ENCODE measurements at regions of chr3 and their contacts with region 1.

Region 1: GRCh38 chr3:121545574-121546455 is at the start of gene POLQ:
- DNase-seq: peak; percentile 96
- H3K4me3 Mint-ChIP-seq: peak within 1 kb of the TSS; percentile 99
- H3K27ac Mint-ChIP-seq: peak within 1 kb of the TSS; percentile 99
- H3K4me1 Mint-ChIP-seq: peaks cover 30% of the 10 kb centered on the region
- H3K27me3 Mint-ChIP-seq: no peaks in the 10 kb centered on the region
- total RNA-seq, gene POLQ: 30.3 and 31.0 TPM in 2 replicates

Region 2: GRCh38 chr3:121660356-121661171 is 114.7 kb after region 1 on chr3 and contains the start of gene HCLS1:
- intact Hi-C with region 1: loop called (anchors 1 kb)
- DNase-seq: peak; percentile 92
- H3K4me3 Mint-ChIP-seq: peak within 1 kb of the TSS; percentile 91
- H3K27ac Mint-ChIP-seq: peak within 1 kb of the TSS; percentile 97
- H3K4me1 Mint-ChIP-seq: peaks cover 46% of the 10 kb centered on the region
- H3K27me3 Mint-ChIP-seq: no peaks in the 10 kb centered on the region
- total RNA-seq, gene HCLS1: 210 and 216 TPM in 2 replicates

Region 3: GRCh38 chr3:122004991-122005565 is 459.3 kb after region 1 on chr3:
- intact Hi-C with region 1: loop called (anchors 10 kb)
- DNase-seq: no peak
- H3K4me3 Mint-ChIP-seq: no peak overlapping the region
- H3K27ac Mint-ChIP-seq: no peak overlapping the region
- H3K4me1 Mint-ChIP-seq: peaks cover 24% of the 10 kb centered on the region
- H3K27me3 Mint-ChIP-seq: peaks cover 8% of the 10 kb centered on the region

Region 4: GRCh38 chr3:122258757-122259371 is 713.0 kb after region 1 on chr3:
- intact Hi-C with region 1: loop called (anchors 1 kb)
- DNase-seq: peak; percentile 85
- H3K4me3 Mint-ChIP-seq: no peak overlapping the region
- H3K27ac Mint-ChIP-seq: no peak overlapping the region
- H3K4me1 Mint-ChIP-seq: peaks cover 16% of the 10 kb centered on the region
- H3K27me3 Mint-ChIP-seq: peaks cover 12% of the 10 kb centered on the region

Region 5: GRCh38 chr3:122383771-122384697 is 838.2 kb after region 1 on chr3 and contains the start of gene FAM162A:
- intact Hi-C with region 1: loop called (anchors 5 kb)
- DNase-seq: peak; percentile 98
- H3K4me3 Mint-ChIP-seq: peak within 1 kb of the TSS; percentile 97
- H3K27ac Mint-ChIP-seq: peak within 1 kb of the TSS; percentile 96
- H3K4me1 Mint-ChIP-seq: peaks cover 64% of the 10 kb centered on the region
- H3K27me3 Mint-ChIP-seq: no peaks in the 10 kb centered on the region
- total RNA-seq, gene FAM162A: 77.8 and 84.9 TPM in 2 replicates

Region 6: DNA sequence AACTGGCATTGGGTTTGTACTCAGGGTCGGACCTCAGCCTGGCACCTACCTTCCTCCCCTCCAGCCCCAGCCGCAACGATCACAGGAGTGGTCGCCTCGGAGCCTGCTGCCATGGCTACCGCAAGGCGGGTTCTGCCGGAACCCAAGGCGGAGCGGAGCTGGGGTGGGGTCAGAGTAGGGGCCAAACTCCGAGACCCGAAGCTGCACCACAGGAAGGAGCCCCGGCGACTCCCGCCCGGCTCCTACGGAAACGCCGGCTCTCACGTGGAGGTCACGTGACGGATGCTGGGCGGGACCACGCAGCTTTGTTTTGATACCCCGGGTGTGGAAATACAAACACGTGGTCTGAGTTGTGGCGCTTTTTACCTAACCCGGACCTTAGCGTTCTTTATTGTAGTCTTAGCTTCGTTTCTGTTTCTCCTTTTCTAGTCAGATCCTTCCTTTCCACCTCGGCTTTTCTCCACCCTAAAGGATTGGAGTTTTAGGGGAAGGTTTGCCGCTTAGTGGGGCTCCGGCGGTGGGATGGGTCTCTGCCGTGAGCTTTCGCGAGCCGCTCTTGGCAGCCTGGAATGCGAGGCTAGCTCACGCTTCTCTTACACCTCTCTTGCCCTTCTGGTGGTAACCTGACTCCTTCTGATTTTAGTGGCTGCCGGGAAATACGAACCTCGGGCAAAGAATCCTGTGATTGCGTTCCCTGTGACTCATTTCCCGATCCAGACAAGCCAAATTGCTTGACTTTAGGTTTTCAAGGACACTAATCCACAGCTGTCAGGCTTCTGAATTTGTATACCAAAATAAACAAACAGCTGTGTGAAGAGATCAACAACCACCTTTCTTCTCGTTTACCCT is 1248.0 kb after region 1 on chr3 and contains the start of gene HSPBAP1:
- intact Hi-C with region 1: loop called (anchors 2 kb)
- DNase-seq: peak; percentile 97
- H3K4me3 Mint-ChIP-seq: peak within 1 kb of the TSS; percentile 90
- H3K27ac Mint-ChIP-seq: peak within 1 kb of the TSS; percentile 88
- H3K4me1 Mint-ChIP-seq: peaks cover 32% of the 10 kb centered on the region
- H3K27me3 Mint-ChIP-seq: no peaks in the 10 kb centered on the region
- total RNA-seq, gene HSPBAP1: 7.5 and 8.7 TPM in 2 replicates

Measured in activated CD4-positive, alpha-beta T cell treated with anti-CD3 and anti-CD28 coated beads, Interleukin-2, amount 10 ng/mL, durations not matched to agents 24 days and 14 days (primary cell).